ENCODE measurements at regions of chr2 and their contacts with region 1.

Region 1: GRCh38 chr2:182631299-182631698 is 84.8 kb upstream of the DNAJC10 start:
- DNase-seq: no peak
- H3K4me3 ChIP-seq: peak overlapping the region in 1 of 59 donors; percentile 25
- H3K27ac ChIP-seq: peak overlapping the region in 1 of 59 donors; percentile 80
- H3K27me3 ChIP-seq: no peaks in the 10 kb centered on the region
- CTCF ChIP-seq: no peak

Region 2: DNA sequence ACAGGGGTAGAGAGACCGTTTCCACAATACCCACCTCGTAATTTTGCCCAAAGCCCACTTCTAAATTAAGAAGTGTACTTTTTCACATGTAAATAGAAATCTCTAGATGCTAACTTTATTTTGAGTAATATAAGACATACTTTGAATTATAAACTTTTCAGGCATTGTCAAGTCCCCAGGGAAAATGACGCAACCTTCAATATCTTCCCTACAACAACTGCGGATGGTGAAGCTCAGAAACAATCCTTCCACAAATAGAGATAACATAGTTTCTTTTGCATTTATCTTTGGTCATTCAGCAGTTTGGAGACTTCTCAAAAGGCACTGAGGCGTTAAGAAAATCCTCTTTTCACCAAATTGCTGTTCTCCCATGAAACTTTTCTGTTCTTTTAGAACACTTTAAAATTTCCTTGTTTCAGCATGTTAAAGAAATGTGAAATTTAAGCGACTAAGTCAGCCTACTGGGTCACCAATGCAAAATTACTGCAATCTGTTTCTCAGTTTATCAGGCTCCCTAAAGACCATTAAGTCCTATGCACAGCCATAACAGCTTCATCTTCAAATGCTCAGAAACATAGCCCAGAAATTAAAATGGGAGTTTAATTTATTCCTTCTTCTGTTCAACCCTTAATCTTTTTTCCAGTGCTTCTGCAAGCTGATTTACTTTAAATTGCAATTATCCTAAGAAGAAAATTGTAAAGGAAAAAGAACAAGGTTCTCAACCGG is 33.6 kb before region 1 on chr2:
- intact Hi-C with region 1: loop called in 1 of 2 experiments (anchors 5 kb)
- DNase-seq: no peak
- H3K4me3 ChIP-seq: no peak overlapping the region
- H3K27ac ChIP-seq: no peak overlapping the region
- H3K27me3 ChIP-seq: no peaks in the 10 kb centered on the region
- CTCF ChIP-seq: no peak

Measured in dorsolateral prefrontal cortex (tissue), 120 donors.